Caco-2 (cell line): ENCODE measurements at regions of chr1 and their contacts with region 1.

Region 1: DNA sequence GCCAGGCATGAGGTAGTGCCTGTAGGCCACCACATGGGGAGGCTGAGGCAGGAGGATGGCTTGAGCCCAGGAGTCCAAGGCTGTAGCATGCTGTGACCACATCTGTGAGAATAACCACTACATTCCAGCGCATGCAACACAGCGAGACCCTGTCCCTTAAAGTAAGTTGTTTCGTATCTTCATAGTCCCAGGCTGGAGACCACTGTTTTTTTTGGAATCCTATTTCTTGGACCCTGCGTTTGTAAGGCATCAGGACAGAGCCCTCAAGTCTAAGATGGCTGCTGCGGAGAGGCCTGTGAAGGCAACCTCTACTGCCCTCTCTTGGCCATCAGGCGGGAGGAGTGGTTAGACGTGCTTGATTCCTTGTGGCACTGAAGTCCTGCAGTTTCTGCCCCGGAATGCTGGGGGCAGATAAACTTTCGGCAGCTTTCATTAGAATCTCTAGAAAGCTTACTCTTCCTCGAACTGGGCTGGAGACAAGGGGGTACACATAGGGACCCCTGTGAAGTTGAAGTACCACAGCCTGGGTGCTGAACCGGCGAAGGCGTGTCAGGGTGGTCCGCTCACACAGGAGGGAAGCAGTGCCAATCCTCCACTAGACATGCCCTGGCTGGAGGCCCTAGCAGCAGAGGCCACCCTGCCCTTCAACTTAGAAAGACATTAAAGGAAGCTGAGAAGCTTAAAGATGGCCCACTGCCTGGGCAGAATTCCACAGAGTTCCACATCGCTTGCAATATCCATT is 36.6 kb downstream of the RABIF start:
- DNase-seq: peak; percentile 71 to 73
- H3K4me3 ChIP-seq: no peak overlapping the region
- H3K4me3 Mint-ChIP-seq: no peak overlapping the region
- H3K27ac Mint-ChIP-seq: no peak overlapping the region
- H3K4me1 ChIP-seq: peaks cover 20% of the 10 kb centered on the region
- H3K4me1 Mint-ChIP-seq: peaks cover 20% of the 10 kb centered on the region
- H3K27me3 ChIP-seq: no peaks in the 10 kb centered on the region
- H3K27me3 Mint-ChIP-seq: no peaks in the 10 kb centered on the region
- CTCF ChIP-seq: peak; percentile 40 to 78

Region 2: GRCh38 chr1:202733251-202733650 is 119.1 kb before region 1 on chr1:
- CTCF ChIA-PET with region 1: no interaction called
- POLR2A ChIA-PET with region 1: no interaction called
- intact Hi-C with region 1: no loop called
- DNase-seq: no peak
- H3K4me3 ChIP-seq: no peak overlapping the region
- H3K4me3 Mint-ChIP-seq: no peak overlapping the region
- H3K27ac Mint-ChIP-seq: no peak overlapping the region
- H3K4me1 ChIP-seq: no peaks in the 10 kb centered on the region
- H3K4me1 Mint-ChIP-seq: no peaks in the 10 kb centered on the region
- H3K27me3 ChIP-seq: no peaks in the 10 kb centered on the region
- H3K27me3 Mint-ChIP-seq: no peaks in the 10 kb centered on the region
- CTCF ChIP-seq: no peak

Region 3: DNA sequence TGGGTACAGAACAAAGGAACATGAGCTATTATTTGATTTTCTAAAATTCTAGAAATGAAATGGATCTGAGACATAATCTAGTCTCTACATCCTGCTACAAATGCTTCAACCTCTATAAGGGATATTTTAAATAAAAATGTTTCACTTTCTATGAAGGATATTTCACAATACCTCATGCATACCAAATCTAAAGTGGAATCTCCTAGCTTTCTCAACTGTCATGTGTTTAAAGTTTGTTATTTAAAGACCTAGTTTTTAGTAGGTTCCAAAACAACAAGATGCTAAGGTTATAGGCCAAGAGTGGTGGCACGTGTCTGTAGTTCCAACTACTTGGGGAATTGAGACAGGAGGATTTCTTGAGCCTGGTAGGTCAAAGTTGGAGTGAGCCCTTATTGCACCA is 91.7 kb before region 1 on chr1:
- CTCF ChIA-PET with region 1: no interaction called
- POLR2A ChIA-PET with region 1: interaction called, 3 read pairs
- intact Hi-C with region 1: loop called (anchors 2 kb)
- DNase-seq: no peak
- H3K4me3 ChIP-seq: no peak overlapping the region
- H3K4me3 Mint-ChIP-seq: no peak overlapping the region
- H3K27ac Mint-ChIP-seq: no peak overlapping the region
- H3K4me1 ChIP-seq: no peaks in the 10 kb centered on the region
- H3K4me1 Mint-ChIP-seq: no peaks in the 10 kb centered on the region
- H3K27me3 ChIP-seq: no peaks in the 10 kb centered on the region
- H3K27me3 Mint-ChIP-seq: no peaks in the 10 kb centered on the region
- CTCF ChIP-seq: no peak

Region 4: DNA sequence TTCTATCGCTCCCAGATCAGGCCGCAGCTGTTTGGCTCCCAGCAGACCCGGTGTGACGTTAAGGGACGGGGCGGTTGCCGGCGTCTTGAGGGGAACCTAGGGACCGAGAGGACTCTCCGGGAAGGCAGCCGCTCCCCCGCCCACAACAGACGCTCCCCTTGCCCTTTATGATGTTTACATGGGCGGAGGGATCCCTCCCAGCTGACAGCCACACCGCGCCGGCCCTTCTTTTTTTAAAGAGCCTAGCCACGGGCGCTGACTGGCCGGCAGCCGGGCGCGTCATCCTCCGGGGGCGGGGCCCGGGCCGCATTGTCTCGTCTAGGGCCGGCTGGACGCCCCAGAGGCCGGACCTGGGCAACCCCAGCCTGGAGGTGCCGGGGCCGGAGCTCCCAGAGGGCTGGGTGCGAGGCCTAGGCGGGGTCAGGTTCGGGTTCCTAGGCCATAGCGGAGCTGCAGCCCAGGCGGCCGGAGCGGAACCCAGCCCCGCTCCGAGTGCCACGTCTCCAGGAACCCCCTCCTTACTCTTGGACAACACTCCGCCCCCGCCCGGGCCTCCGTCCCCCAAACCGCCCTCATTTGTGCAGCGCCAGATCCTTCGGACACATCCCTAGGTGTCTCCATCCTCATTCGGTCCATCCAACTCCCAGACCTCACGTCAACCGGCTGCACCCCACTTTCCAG is 41.6 kb before region 1 on chr1 and contains the start of gene PCAT6:
- CTCF ChIA-PET with region 1: no interaction called
- POLR2A ChIA-PET with region 1: no interaction called
- intact Hi-C with region 1: loop called (anchors 1 kb)
- DNase-seq: peak; percentile 97
- H3K4me3 ChIP-seq: peak within 1 kb of the TSS; percentile 62
- H3K4me3 Mint-ChIP-seq: peak within 1 kb of the TSS; percentile 89
- H3K27ac Mint-ChIP-seq: peak within 1 kb of the TSS; percentile 53
- H3K4me1 ChIP-seq: peaks cover 30% of the 10 kb centered on the region
- H3K4me1 Mint-ChIP-seq: peaks cover 41% of the 10 kb centered on the region
- H3K27me3 ChIP-seq: no peaks in the 10 kb centered on the region
- H3K27me3 Mint-ChIP-seq: no peaks in the 10 kb centered on the region
- CTCF ChIP-seq: no peak
- total RNA-seq, gene PCAT6: 1.4 TPM in 1 of 2 replicates, not detected in the other